MCF 10A (cell line): ENCODE measurements at regions of chr11 and their contacts with region 1.

Region 1: GRCh38 chr11:108733479-108734116 is 68.7 kb downstream of the DDX10 start:
- DNase-seq: peak; percentile 68
- H3K4me3 Mint-ChIP-seq: no peak overlapping the region
- H3K27ac Mint-ChIP-seq: no peak overlapping the region
- H3K4me1 Mint-ChIP-seq: peaks cover 18% of the 10 kb centered on the region
- H3K27me3 Mint-ChIP-seq: no peaks in the 10 kb centered on the region
- CTCF ChIP-seq: no peak

Region 2: GRCh38 chr11:108474664-108475485 is 258.7 kb before region 1 on chr11:
- CTCF ChIA-PET with region 1: no interaction called
- POLR2A ChIA-PET with region 1: no interaction called
- intact Hi-C with region 1: no loop called
- DNase-seq: no peak
- H3K4me3 Mint-ChIP-seq: no peak overlapping the region
- H3K27ac Mint-ChIP-seq: no peak overlapping the region
- H3K4me1 Mint-ChIP-seq: no peaks in the 10 kb centered on the region
- H3K27me3 Mint-ChIP-seq: no peaks in the 10 kb centered on the region
- CTCF ChIP-seq: no peak

Region 3: DNA sequence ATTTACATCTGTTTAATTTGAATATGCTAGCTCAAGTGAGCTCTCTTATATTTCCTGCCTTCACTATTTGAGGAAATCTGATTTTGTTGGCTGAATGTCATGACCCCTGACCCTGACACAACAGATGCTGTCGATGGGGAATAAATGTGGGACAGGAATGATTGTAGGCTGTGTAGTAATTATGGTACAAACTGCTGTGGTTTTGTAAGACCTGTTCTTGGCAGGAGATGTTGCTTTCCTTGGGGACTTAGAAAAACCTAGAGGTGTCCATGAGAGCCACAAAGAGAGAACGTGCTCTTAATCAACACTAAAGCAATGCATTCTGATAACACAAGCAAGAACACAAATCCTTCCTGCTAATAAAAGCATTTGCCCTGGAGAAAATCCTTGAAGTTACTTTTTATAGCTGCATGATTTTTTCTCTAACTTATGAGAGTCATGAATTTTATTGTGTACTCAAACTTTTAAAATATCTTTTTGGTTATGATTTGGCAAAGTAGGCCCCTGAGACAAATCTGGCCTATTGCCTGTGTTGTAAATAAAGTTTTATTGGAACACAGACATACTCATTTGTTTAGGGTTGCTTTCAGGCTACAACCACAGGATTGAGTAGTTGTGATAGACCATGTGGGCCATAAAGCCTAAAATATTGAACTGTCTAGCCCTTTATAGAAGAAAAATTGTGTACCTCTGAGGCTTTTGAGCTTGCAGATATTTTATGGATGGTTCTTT is 21.5 kb after region 1 on chr11:
- CTCF ChIA-PET with region 1: interaction called, 10 read pairs
- POLR2A ChIA-PET with region 1: interaction called, 6 read pairs
- intact Hi-C with region 1: no loop called
- DNase-seq: peak; percentile 40
- H3K4me3 Mint-ChIP-seq: no peak overlapping the region
- H3K27ac Mint-ChIP-seq: no peak overlapping the region
- H3K4me1 Mint-ChIP-seq: peaks cover 18% of the 10 kb centered on the region
- H3K27me3 Mint-ChIP-seq: no peaks in the 10 kb centered on the region
- CTCF ChIP-seq: no peak